Left lung (tissue), 14 donors: ENCODE measurements at regions of chr2 and their contacts with region 1.

Region 1: DNA sequence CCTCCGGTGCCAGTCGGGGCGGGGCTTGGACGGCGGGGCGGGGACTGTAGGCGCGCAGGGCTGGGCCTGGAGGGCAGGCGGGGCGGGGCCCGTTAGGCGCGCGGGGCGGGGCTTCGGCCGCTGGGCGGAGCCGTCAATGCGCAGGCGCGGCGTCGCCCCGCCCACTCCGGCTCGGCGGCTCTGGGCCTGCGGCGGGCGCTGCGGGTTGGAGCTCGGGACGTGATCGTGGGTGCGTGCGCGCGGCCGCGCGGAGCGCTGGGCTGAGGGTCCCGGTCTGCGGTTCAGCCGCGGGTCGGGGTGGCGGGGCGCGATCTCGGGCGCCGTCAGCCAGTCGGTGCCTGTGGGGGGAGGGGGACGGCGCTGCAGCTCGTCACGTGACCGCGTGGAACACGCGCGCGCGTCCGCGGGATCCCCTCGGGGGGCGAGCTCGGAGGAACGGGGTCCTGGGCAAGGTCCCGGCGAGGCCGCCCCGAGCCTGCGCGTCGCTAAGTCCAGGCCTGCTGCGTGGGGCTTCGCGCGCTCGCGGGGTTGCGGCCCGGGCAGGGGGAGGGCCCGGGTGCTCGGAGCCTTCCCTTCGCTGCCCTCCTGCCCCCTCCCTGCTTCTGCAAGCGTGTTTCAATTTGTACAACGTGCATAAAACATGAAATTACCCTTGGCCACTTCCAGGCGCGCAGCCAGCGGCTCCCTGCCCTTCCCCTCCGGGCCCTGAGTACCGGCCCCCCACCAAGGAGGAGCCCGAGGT is at the start of gene D2HGDH:
- DNase-seq: peak; percentile 84 to 100 (median 93)
- ATAC-seq: peak; percentile 95
- H3K4me3 ChIP-seq: peak within 1 kb of the TSS; percentile 98
- H3K27ac ChIP-seq: peak within 1 kb of the TSS; percentile 84 to 87
- H3K4me1 ChIP-seq: peaks cover 4 to 55% of the 10 kb centered on the region in 2 donors
- H3K27me3 ChIP-seq: no peaks in the 10 kb centered on the region
- CTCF ChIP-seq: no peak
- polyA plus RNA-seq, gene D2HGDH: 32.8 to 53.3 (median 44.1) TPM

Region 2: GRCh38 chr2:241877989-241878970 is 143.6 kb after region 1 on chr2:
- intact Hi-C with region 1: loop called in 1 of 2 experiments (anchors 10 kb)
- DNase-seq: peak in 2 of 4 donors; percentile 80 to 91
- ATAC-seq: peak; percentile 25
- H3K4me3 ChIP-seq: no peak overlapping the region
- H3K27ac ChIP-seq: no peak overlapping the region
- H3K4me1 ChIP-seq: peaks cover 9 to 19% of the 10 kb centered on the region in 2 donors
- H3K27me3 ChIP-seq: no peaks in the 10 kb centered on the region
- CTCF ChIP-seq: peak; percentile 51 to 58